Tibial artery (tissue), 4 donors: ENCODE measurements at regions of chr9 and their contacts with region 1.

Region 1: DNA sequence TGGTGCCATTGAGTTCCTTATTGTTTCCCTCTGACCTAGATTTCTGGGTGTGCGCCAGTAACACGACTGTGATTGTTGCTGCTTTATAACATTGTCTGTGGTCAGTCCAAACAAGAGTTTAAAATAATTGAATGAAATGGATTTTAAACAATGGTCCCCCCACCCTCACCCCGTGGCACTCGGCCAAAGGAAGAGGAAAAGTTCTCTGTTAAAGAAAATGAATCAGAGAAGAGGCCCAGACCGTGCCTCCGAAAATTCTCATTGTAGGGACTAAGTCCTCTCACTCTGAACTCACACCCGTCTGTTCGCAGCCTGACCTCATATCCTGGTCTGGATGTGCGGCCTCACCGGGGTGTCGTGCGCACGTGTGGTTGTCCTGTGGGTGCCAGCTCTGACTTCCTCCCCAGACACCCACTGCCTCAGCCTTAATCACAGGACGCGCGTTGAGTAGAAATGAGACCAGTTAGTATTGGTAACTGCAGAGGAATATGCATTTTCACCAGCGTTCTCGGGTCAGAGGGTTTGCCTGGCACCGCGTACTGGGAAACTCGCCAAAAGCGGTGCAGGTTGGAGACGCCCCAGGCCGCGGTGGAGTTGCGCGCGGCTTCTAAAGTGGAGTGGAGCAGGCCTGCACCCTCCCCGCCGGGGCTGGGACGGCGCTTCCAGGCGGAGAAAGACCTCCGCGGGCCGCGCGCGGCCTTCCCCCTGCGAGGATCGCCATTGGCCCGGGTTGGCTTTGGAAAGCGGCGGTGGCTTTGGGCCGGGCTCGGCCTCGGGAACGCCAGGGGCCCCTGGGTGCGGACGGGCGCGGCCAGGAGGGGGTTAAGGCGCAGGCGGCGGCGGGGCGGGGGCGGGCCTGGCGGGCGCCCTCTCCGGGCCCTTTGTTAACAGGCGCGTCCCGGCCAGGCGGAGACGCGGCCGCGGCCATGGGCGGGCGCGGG is at the start of gene ABL1:
- DNase-seq: peak; percentile 77 to 85
- H3K4me3 ChIP-seq: peak within 1 kb of the TSS; percentile 62
- H3K27ac ChIP-seq: peak within 1 kb of the TSS; percentile 89 to 91
- H3K4me1 ChIP-seq: peaks cover 0 to 54% (median 35%) of the 10 kb centered on the region in 4 donors
- H3K27me3 ChIP-seq: no peaks in the 10 kb centered on the region
- CTCF ChIP-seq: no peak

Region 2: GRCh38 chr9:130701056-130702022 is 133.3 kb before region 1 on chr9:
- intact Hi-C with region 1: no loop called
- DNase-seq: peak; percentile 71 to 86
- H3K4me3 ChIP-seq: no peak overlapping the region
- H3K27ac ChIP-seq: peak overlapping the region; percentile 35 to 41
- H3K4me1 ChIP-seq: peaks cover 0 to 15% (median 7%) of the 10 kb centered on the region in 4 donors
- H3K27me3 ChIP-seq: no peaks in the 10 kb centered on the region
- CTCF ChIP-seq: peak; percentile 89 to 94

Region 3: GRCh38 chr9:130780865-130781504 is 53.7 kb before region 1 on chr9:
- intact Hi-C with region 1: loop called (anchors 5 kb)
- DNase-seq: peak; percentile 85 to 93
- H3K4me3 ChIP-seq: peak overlapping the region; percentile 46 to 58
- H3K27ac ChIP-seq: peak overlapping the region; percentile 86 to 96
- H3K4me1 ChIP-seq: peaks cover 5 to 63% (median 39%) of the 10 kb centered on the region in 4 donors
- H3K27me3 ChIP-seq: no peaks in the 10 kb centered on the region
- CTCF ChIP-seq: no peak